ENCODE measurements at regions of chr6 and their contacts with region 1.

Region 1: GRCh38 chr6:133916650-133917151 is 27.8 kb downstream of the TCF21 start:
- DNase-seq: peak; percentile 89

Region 2: GRCh38 chr6:133432021-133432989 is 484.4 kb before region 1 on chr6:
- intact Hi-C with region 1: no loop called
- DNase-seq: no peak

Region 3: DNA sequence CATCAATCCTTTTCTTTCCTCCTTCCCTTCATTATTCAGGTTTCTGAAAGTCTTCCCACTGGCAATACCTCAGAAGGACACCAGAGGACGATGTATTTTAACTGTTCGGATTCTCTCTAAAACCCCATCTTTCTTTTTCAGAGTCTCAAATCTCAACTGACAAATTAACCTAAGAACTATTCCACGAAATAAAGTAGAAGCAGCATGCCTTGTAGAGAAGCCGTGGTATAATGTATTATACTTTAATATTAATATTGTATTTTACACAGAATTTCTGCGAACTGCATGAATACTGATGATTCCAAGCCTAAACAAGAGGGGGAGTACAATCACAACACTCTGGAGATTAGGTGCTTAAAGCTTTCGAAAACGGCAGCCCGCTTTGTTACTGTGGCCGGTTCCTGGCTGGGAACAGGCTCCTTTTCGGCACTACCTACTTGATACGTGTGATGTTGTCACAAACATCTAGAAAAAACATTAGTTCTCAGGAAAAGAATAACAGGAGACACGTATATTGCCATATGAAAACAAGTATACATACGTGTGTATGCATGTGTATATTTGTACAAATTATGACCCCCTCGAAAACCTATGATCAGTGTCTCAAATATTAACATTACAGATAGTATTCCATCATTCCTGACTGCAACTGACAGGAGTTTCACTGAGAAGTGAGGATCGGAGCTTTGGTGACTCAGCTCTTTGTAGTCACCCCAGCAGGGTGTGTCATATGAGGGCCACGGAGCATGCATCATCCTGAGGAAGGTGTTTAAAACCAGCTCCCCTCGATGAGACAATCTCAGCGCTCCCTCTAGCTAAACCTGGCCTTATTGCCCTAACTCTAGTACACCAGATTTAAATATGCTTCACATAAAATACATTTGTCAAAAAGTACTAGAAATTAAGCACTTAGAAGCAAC is 347.5 kb before region 1 on chr6:
- intact Hi-C with region 1: loop called (anchors 1 kb)
- DNase-seq: no peak

Region 4: DNA sequence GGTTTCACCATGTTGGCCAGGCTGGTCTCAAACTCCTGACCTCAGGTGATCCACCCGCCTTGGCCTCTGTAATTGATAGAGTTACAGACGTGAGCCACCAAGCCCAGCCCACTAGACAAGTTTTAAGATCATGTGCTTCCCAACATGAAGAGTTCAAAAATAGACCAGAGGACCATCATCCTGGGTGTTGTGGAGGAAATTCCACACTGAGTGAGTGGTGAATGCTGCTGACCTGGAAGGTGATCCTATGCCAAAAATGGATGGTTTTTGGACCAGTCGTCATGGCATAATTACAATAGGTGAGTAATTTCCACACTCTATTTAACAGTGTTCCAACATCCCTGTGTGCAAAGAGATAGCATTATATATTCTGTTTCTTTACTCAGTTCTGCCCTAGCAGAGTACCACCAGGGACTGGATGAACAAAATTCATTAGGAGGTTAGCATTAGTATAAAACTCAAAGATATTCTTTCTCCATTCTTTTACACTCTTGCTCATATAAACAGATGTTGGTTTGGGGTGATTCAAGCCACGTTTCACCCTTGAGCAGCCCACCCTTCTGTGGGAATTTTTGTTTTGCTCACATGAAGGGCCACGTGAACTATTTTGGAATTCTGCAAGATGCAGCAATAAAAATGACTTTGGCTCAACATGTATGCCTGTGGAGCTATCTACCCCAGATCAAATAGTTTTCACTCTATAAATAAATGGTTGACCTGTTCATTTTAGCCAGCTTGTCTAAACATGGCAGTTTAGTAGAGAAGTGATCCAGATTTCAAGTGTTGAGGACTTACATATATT is 234.0 kb before region 1 on chr6:
- intact Hi-C with region 1: no loop called
- DNase-seq: no peak

Region 5: GRCh38 chr6:133837801-133838349 is 78.8 kb before region 1 on chr6:
- intact Hi-C with region 1: loop called (anchors 10 kb)
- DNase-seq: no peak

Region 6: GRCh38 chr6:134173936-134174671 is 257.4 kb after region 1 on chr6:
- intact Hi-C with region 1: no loop called
- DNase-seq: peak; percentile 86

Measured in cardiac septum (tissue), 1 donor.